ENCODE measurements at regions of chr7 and their contacts with region 1.

Region 1: DNA sequence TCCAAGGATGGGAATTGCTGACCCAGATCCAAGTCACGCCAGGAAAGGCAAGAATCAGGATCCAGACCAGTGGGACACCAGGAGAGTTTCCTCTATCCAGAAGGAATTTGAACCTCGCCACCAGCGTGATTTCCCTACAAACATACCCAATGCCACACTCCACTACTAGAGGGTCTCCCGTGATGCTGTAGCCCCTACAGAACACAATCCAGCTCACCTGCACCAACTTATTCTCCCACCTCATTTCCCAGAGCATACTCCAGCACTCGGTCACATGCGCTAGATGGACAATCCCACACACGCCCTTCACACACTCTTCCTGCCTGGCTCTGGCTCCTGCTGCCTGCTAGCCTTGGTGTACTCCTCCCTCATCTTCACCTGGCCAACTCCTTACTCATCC is 142.1 kb upstream of the PDE1C start:
- DNase-seq: no peak
- ATAC-seq: no peak

Region 2: GRCh38 chr7:32275216-32275979 is 63.1 kb after region 1 on chr7:
- intact Hi-C with region 1: no loop called
- DNase-seq: no peak
- ATAC-seq: no peak

Region 3: GRCh38 chr7:32347244-32347828 is 135.0 kb after region 1 on chr7:
- intact Hi-C with region 1: loop called (anchors 5 kb)
- DNase-seq: peak; percentile 63
- ATAC-seq: no peak